Activated naive CD4-positive, alpha-beta T cell treated with anti-CD3 and anti-CD28 coated beads for 36 hours (primary cell): ENCODE measurements at regions of chr15 and their contacts with region 1.

Region 1: GRCh38 chr15:82292271-82292670 is 29.7 kb downstream of the SAXO2 start:
- DNase-seq: no peak
- H3K4me3 Mint-ChIP-seq: no peak overlapping the region
- H3K27ac Mint-ChIP-seq: no peak overlapping the region
- H3K4me1 Mint-ChIP-seq: peaks cover 4% of the 10 kb centered on the region
- H3K27me3 Mint-ChIP-seq: no peaks in the 10 kb centered on the region

Region 2: GRCh38 chr15:81410318-81410753 is 881.9 kb before region 1 on chr15:
- CTCF ChIA-PET with region 1: no interaction called
- intact Hi-C with region 1: no loop called
- DNase-seq: peak; percentile 31
- H3K4me3 Mint-ChIP-seq: no peak overlapping the region
- H3K27ac Mint-ChIP-seq: no peak overlapping the region
- H3K4me1 Mint-ChIP-seq: peaks cover 12% of the 10 kb centered on the region
- H3K27me3 Mint-ChIP-seq: peaks cover 14% of the 10 kb centered on the region

Region 3: GRCh38 chr15:82262422-82263026 is 29.7 kb before region 1 on chr15 and contains the starts of genes EFL1 and SAXO2:
- CTCF ChIA-PET with region 1: no interaction called
- intact Hi-C with region 1: loop called (anchors 2 kb)
- DNase-seq: peak; percentile 94
- H3K4me3 Mint-ChIP-seq: peak within 1 kb of the TSS; percentile 93
- H3K27ac Mint-ChIP-seq: peak within 1 kb of the TSS; percentile 71
- H3K4me1 Mint-ChIP-seq: peaks cover 25% of the 10 kb centered on the region
- H3K27me3 Mint-ChIP-seq: no peaks in the 10 kb centered on the region
- total RNA-seq, gene EFL1: 15.8 to 18.6 TPM
- total RNA-seq, gene SAXO2: 0.69 to 0.79 TPM

Region 4: DNA sequence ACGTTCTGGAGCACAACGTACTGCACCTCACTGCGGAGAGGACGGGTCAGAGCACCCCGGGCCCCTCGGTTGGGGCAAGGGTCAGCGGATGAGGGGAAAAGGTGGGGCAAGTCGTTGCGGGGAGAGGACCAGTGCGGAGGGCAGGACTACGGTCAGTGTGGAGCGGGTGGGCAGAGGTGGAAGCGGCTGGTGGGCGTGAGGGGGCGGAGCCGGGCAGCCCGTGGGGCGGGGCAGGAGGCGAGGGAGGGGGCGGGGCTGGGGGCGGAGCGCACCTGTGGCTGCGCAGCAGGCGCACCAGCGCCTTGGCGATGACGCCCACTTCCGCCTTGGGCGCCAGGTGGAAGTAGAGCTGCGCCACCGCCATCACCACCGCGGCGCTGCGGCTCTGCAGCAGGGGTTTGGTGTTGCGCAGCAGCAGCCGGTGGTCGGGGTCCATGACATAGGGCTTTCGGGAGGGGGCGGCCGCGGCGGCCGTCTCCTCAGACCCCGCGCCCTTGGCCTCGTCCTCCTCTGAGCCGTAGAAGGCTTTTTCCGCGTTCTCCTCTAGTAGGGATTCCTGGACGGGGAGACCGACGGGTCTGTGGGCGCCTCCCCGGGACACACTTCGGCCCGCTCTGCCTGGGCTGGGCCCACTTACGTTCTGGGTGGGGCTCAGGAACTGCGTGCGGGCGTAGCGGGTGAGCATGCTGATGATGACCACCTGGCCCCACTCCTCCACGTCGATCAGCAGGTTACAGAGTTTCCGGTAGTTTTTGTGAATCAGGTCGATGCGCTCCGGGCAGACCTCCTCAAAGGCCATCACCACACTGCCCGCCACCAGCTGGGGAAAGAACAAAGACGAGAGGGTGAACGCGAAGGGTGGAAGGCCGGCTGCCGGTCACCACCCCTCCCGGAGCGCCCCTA is 388.2 kb after region 1 on chr15:
- CTCF ChIA-PET with region 1: no interaction called
- intact Hi-C with region 1: no loop called
- DNase-seq: peak; percentile 86
- H3K4me3 Mint-ChIP-seq: peak overlapping the region; percentile 88
- H3K27ac Mint-ChIP-seq: peak overlapping the region; percentile 47
- H3K4me1 Mint-ChIP-seq: peaks cover 7% of the 10 kb centered on the region
- H3K27me3 Mint-ChIP-seq: peaks cover 2% of the 10 kb centered on the region

Region 5: DNA sequence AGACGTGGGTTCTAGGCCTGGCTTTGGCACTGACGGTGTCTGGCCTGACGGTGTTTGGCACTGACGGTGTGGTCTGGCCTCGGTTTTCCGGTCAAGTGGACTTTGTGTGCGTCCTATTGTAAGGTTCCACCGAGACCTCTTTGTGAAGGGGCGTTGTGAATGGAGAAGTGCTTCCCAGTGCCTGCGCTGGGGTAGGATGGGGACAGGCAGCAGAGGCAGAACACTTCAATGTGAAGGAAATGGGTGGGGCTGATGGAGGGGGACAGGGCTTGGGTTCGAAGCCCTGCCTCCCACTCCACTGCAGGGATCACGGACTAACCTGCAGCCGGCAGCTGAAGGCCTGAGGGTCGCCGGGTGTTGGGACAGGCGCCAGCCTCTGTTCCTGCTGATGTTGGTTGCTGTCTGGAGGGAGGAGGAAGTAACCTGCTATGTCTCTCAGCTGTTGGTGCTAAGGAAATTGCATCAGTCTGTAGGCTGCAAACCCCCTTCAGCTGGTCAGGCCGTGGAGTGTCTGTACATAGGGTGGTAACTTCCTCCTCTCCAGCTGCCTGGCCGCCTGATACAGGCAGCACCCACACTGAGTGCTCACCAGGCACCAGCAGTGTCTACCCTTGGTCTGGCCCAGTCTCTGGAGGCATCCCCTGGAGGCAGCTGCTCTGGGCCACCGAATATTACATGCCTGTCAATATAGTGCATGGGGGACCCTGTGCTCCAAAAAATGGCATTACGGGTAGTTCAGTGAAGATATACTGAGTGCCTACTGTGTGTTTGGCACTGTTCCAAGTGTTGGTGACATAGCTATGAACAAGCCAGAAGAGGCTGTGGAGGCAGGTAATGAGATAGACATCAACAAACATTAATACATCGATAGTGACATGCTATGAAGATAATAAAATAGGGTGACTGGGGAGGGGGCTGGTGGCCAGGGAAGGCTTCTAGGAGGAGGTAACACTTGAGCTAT is 816.3 kb after region 1 on chr15:
- CTCF ChIA-PET with region 1: no interaction called
- intact Hi-C with region 1: no loop called
- DNase-seq: peak; percentile 39
- H3K4me3 Mint-ChIP-seq: peak overlapping the region; percentile 81
- H3K27ac Mint-ChIP-seq: no peak overlapping the region
- H3K4me1 Mint-ChIP-seq: peaks cover 16% of the 10 kb centered on the region
- H3K27me3 Mint-ChIP-seq: peaks cover 58% of the 10 kb centered on the region